Prostate gland (tissue), 2 donors: ENCODE measurements at regions of chr7 and their contacts with region 1.

Region 1: DNA sequence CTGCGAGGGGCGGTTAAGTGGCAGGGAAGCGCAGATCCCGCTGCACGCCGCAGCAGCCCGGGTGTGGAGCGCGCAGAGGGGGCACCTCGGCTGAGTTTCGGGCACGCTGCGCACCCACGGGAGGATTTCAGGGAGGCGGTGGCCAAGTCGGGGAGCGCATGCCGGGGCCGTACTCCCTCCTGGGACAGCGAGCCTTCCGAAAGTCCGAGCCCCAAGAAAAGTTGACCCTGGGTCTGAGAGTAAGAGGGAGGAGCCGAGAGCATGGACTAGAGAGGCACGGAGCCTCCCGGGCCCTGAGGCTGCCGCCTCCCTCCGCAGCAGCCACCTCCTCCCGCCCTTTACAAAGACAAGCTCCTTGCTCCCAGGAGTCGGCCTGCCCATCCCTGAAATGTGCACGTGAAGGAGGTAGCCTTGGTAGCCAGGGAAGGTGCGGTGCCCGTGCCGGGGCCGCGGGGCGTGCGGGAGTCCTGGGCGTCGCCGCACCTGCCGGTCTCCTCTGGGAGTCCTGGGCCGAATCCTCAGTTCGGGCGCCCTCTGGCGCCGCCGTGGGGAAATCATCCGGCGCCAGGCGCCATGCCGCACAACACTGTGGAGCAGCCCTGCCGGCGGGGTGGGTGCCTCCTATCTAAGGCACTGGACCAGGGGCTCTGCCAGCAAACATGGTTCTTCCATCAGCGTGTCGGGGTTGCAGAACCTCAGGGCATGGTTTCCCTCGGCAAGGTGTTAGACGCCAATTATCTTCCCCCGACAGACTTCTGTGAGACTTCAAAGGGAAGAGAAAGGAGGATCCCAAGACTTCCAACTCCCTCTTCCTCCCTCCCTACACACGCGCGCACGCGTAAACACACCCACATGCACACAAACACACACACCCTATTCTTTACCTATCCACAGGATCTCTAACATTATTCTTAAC is 104.0 kb downstream of the TRIL start:
- DNase-seq: peak; percentile 65
- H3K4me3 ChIP-seq: peak overlapping the region; percentile 26 to 38
- H3K27ac ChIP-seq: no peak overlapping the region
- H3K4me1 ChIP-seq: no peaks in the 10 kb centered on the region
- H3K27me3 ChIP-seq: no peaks in the 10 kb centered on the region
- CTCF ChIP-seq: peak; percentile 61 to 91 (median 82)
- POLR2A ChIP-seq: no peak

Region 2: GRCh38 chr7:28298870-28299518 is 555.1 kb before region 1 on chr7:
- intact Hi-C with region 1: loop called (anchors 5 kb)
- DNase-seq: peak; percentile 38
- H3K4me3 ChIP-seq: no peak overlapping the region
- H3K27ac ChIP-seq: no peak overlapping the region
- H3K4me1 ChIP-seq: no peaks in the 10 kb centered on the region
- H3K27me3 ChIP-seq: no peaks in the 10 kb centered on the region
- CTCF ChIP-seq: peak in 3 of 4 experiments; percentile 31 to 60 (median 49)
- POLR2A ChIP-seq: no peak

Region 3: GRCh38 chr7:28389504-28390395 is 464.3 kb before region 1 on chr7:
- intact Hi-C with region 1: loop called (anchors 2 kb)
- DNase-seq: peak; percentile 33
- H3K4me3 ChIP-seq: peak overlapping the region in 1 of 2 donors; percentile 7
- H3K27ac ChIP-seq: no peak overlapping the region
- H3K4me1 ChIP-seq: no peaks in the 10 kb centered on the region
- H3K27me3 ChIP-seq: no peaks in the 10 kb centered on the region
- CTCF ChIP-seq: peak; percentile 67 to 82 (median 74)
- POLR2A ChIP-seq: no peak

Region 4: DNA sequence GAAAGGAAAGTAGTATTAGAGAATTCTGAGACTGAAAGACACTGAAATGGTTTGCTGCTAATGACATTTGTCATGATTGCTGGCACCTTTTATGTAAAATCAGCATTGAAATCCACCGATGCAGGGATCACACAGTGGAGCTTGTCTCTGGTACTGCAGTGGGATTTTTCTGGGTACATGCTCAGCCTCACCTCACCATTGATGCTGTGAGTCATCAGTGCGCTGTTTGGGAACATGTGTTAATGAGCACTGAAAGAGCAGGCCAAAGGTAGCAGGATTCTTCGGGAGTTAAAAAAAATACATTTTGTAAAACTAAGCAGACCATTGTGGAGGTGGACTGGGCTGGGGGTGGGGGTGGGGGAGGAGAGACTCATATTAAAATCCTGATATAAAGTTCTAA is 266.9 kb before region 1 on chr7:
- intact Hi-C with region 1: no loop called
- DNase-seq: peak; percentile 19
- H3K4me3 ChIP-seq: no peak overlapping the region
- H3K27ac ChIP-seq: no peak overlapping the region
- H3K4me1 ChIP-seq: no peaks in the 10 kb centered on the region
- H3K27me3 ChIP-seq: peaks cover 2% of the 10 kb centered on the region
- CTCF ChIP-seq: no peak
- POLR2A ChIP-seq: no peak

Region 5: GRCh38 chr7:28626624-28627262 is 227.3 kb before region 1 on chr7:
- intact Hi-C with region 1: loop called (anchors 10 kb)
- DNase-seq: no peak
- H3K4me3 ChIP-seq: no peak overlapping the region
- H3K27ac ChIP-seq: no peak overlapping the region
- H3K4me1 ChIP-seq: no peaks in the 10 kb centered on the region
- H3K27me3 ChIP-seq: no peaks in the 10 kb centered on the region
- CTCF ChIP-seq: peak in 3 of 4 experiments; percentile 43 to 61 (median 47)
- POLR2A ChIP-seq: no peak

Region 6: GRCh38 chr7:28685644-28686417 is 168.3 kb before region 1 on chr7:
- intact Hi-C with region 1: loop called (anchors 10 kb)
- DNase-seq: peak; percentile 93
- H3K4me3 ChIP-seq: peak overlapping the region; percentile 14 to 18
- H3K27ac ChIP-seq: no peak overlapping the region
- H3K4me1 ChIP-seq: no peaks in the 10 kb centered on the region
- H3K27me3 ChIP-seq: no peaks in the 10 kb centered on the region
- CTCF ChIP-seq: no peak
- POLR2A ChIP-seq: peak; percentile 45